ENCODE measurements at regions of chr7 and their contacts with region 1.

Region 1: DNA sequence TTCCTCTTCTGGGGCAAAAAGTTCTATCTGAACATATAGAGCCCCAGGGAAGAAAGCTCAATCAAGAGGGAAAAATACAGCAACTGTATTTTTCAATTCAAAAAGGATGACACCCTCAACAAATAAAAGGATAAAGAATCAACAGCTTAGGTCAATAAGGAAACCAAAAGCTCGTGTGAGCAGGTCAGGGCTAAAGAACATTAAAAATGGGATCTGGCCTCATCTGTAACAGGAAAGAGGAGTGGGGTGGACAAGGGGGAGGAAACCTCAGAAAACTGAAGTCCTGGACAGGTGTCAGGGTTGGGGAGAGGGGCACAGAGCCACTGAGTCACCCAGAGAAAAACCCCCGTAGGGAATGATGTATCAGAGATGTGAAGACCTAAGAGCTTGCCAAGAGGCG is 20.0 kb downstream of the AZGP1 start:
- DNase-seq: peak; percentile 11
- ATAC-seq: peak; percentile 33; the same call in 1 of the 2 replicates
- H3K4me3 ChIP-seq: no peak overlapping the region
- H3K27ac ChIP-seq: peak overlapping the region; percentile 50
- H3K4me1 ChIP-seq: peaks cover 10% of the 10 kb centered on the region
- H3K27me3 ChIP-seq: peaks cover 12% of the 10 kb centered on the region
- CTCF ChIP-seq: no peak

Region 2: DNA sequence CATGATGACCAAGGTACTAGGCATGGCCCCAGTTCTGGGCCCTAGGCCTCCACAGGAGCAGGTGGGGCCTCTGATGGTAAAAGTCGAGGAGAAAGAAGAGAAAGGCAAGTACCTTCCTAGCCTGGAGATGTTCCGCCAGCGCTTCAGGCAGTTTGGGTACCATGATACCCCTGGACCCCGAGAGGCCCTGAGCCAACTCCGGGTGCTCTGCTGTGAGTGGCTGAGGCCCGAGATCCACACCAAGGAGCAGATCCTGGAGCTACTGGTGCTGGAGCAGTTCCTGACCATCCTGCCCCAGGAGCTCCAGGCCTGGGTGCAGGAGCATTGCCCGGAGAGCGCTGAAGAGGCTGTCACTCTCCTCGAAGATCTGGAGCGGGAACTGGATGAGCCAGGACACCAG is 101.2 kb after region 1 on chr7:
- CTCF ChIA-PET with region 1: no interaction called
- POLR2A ChIA-PET with region 1: interaction called, 21 read pairs
- intact Hi-C with region 1: no loop called
- DNase-seq: no peak
- ATAC-seq: no peak
- H3K4me3 ChIP-seq: no peak overlapping the region
- H3K27ac ChIP-seq: no peak overlapping the region
- H3K4me1 ChIP-seq: no peaks in the 10 kb centered on the region
- H3K27me3 ChIP-seq: no peaks in the 10 kb centered on the region
- CTCF ChIP-seq: no peak

Measured in PC-3 (cell line).